HCT116 (cell line): ENCODE measurements at regions of chr14 and their contacts with region 1.

Region 1: DNA sequence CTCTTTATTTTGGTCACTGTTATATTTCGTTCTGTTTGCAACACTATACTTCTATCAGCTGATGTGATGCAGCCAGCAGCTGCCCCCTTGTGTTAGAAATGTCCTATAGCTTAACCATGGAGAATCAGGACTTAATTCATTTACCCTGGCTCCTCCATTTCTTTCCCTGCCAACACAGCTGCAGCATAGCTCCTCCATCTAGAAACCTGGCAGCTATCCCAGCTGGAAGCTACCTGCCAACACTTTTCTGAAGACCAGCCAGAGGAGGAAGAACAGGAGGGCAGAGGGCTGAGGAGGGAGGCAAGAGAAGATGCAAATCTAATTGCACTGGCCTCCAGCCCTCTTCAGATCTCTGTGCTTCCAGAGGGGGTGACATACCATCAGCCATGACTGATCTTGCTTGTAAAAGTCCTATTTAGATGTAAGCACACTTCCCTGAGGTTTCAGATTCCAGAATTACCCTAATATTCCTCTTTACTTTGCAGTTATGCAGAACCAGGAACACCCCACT is 156.8 kb upstream of the TMEM260 start:
- DNase-seq: peak; percentile 16
- ATAC-seq: peak; percentile 85
- H3K4me3 ChIP-seq: no peak overlapping the region
- H3K27ac ChIP-seq: no peak overlapping the region
- H3K4me1 ChIP-seq: no peaks in the 10 kb centered on the region
- H3K27me3 ChIP-seq: peaks cover 18% of the 10 kb centered on the region; the same call in 1 of the 2 replicates
- CTCF ChIP-seq: peak; percentile 46 to 70 (median 66); a peak in 5 of 6 replicates
- POLR2A ChIP-seq: no peak
- RAD21 ChIP-seq: peak; percentile 60

Region 2: GRCh38 chr14:55707365-55707804 is 715.4 kb before region 1 on chr14:
- CTCF ChIA-PET with region 1: interaction called, 3 read pairs
- POLR2A ChIA-PET with region 1: no interaction called
- RAD21 ChIA-PET with region 1: no interaction called
- intact Hi-C with region 1: loop called (anchors 1 kb)
- DNase-seq: no peak
- ATAC-seq: peak; percentile 67
- H3K4me3 ChIP-seq: no peak overlapping the region
- H3K27ac ChIP-seq: no peak overlapping the region
- H3K4me1 ChIP-seq: no peaks in the 10 kb centered on the region
- H3K27me3 ChIP-seq: no peaks in the 10 kb centered on the region
- CTCF ChIP-seq: peak; percentile 50 to 74 (median 53); a peak in 5 of 6 replicates
- POLR2A ChIP-seq: no peak
- RAD21 ChIP-seq: peak; percentile 83

Region 3: GRCh38 chr14:56491299-56492285 is 68.8 kb after region 1 on chr14:
- CTCF ChIA-PET with region 1: no interaction called
- POLR2A ChIA-PET with region 1: no interaction called
- RAD21 ChIA-PET with region 1: no interaction called
- intact Hi-C with region 1: no loop called
- DNase-seq: peak; percentile 79
- ATAC-seq: peak; percentile 89
- H3K4me3 ChIP-seq: no peak overlapping the region
- H3K27ac ChIP-seq: no peak overlapping the region
- H3K4me1 ChIP-seq: no peaks in the 10 kb centered on the region
- H3K27me3 ChIP-seq: 0 out of 2 replicates have a peak, but pooled peaks cover 4% of the 10 kb centered on the region
- CTCF ChIP-seq: peak; percentile 55 to 81 (median 76); a peak in 5 of 6 replicates
- POLR2A ChIP-seq: no peak
- RAD21 ChIP-seq: peak; percentile 77